ENCODE measurements at regions of chr17 and their contacts with region 1.

Region 1: DNA sequence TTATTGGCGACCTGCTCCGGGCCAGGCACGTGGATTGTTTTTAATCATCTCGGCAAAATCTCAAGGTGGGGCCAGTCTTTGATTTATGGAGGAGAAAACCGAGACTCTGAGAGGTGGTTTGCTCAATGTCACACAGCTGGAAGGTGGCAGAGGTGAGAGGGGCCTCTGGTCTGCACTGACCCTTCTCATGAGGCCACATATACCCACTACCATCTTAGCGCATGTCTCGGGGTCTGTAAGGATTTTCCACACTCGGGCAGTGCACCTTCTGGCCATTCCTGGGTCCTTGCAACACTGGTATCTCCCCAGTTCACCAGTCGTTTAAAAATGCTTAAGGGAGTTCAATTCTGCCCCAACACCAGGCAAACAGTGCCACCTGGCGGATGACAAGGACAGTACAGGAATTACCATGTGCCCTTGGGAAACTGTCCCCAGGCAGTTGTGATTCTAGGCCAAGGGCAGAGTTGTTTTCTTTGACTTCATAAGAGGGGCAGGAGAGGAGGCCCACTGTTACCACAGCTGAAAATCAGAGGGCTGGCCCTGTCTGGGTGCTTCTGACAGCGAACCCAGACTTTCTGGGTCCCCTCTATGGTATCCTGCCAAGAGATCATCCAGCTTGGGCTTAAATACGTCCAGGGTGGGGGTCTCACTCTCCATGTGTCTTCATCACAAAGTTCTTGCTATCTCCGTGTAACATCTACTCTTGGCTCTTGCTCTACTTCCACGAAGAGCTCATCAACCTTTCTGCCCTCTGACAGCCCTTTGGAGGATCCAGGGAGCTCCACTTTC is 39.4 kb upstream of the RAI1 start:
- DNase-seq: peak; percentile 90
- H3K4me3 Mint-ChIP-seq: no peak overlapping the region
- H3K27ac Mint-ChIP-seq: no peak overlapping the region
- H3K4me1 Mint-ChIP-seq: no peaks in the 10 kb centered on the region
- H3K27me3 Mint-ChIP-seq: no peaks in the 10 kb centered on the region

Region 2: DNA sequence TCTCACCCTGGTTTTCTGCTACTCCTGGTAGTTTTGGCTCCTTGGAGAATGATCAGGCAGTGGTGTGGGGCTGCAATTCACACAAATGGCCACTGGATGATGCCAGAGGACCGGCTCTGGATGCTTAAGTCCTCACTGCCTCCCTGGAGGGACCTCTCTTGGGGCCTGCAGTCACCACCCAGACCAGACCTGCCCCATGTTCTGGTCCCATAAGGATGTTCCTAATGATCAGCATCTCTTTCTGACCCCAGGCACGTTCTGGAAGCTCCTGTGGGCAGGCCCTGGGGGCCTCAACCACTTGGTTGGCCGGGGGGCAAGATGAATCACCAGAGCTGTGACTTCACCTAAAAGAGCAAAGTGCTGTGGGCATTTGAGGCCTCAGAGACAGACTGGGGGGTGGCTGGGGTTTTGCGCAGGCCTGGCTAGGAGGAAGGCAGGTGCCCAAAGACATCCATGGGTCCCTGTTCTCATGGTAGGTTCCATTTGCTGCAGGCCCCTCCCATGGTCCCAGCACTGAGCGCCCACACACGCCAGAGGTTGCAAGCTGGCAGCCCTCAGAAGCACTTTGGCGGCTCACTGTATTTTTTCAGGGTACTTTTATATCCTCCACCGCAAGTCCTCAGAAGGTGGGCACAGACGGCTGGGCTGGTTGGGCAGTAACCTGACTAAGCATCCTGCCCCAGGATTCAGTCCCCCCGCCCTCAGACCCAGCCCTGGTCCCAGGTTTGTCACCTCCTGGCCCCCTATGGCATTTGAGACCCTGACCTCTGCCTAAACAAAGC is 285.5 kb before region 1 on chr17:
- CTCF ChIA-PET with region 1: interaction called, 63 read pairs
- intact Hi-C with region 1: loop called (anchors 1 kb)
- DNase-seq: peak; percentile 83
- H3K4me3 Mint-ChIP-seq: no peak overlapping the region
- H3K27ac Mint-ChIP-seq: no peak overlapping the region
- H3K4me1 Mint-ChIP-seq: no peaks in the 10 kb centered on the region
- H3K27me3 Mint-ChIP-seq: no peaks in the 10 kb centered on the region

Region 3: DNA sequence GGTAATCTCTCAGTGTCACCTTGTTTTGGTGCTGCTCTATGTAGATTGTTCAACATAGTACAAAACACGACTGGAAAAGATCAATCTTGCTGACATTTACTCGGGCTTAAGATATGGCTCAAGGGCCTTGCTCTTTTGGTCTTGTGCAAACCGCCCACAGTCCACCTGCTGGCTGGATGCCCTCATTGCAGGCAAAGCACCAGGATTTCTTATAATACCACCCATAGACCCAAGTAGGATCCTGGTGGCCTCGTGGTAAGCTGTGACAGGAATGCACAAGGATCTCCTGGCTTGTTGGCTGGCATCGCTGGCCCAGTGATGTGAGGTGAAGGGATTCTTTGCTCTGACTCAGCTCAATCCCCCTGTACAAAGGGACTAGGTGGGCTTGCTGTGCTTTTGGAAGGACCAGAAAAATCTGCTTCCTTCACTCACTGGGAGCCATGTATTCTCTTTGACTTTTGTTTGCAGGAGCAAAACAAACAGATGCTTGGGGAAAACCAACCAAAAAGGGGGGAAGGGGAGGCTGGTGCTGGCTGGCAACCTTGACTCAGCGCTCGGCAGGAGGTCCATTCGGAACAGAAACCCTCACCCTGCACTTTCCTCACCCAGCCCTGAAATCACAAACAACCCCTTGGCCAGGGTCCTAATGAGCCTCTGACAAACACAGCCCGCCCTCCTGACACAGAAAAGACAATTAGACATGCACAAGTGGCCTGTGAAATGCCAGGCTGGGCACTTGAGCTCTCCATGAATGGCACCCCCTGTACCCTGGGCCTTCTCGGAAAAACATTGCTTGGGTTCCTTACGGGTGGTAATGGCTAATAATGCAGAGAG is 201.6 kb before region 1 on chr17:
- CTCF ChIA-PET with region 1: no interaction called
- intact Hi-C with region 1: loop called (anchors 1 kb)
- DNase-seq: peak; percentile 85
- H3K4me3 Mint-ChIP-seq: no peak overlapping the region
- H3K27ac Mint-ChIP-seq: no peak overlapping the region
- H3K4me1 Mint-ChIP-seq: peaks cover 4% of the 10 kb centered on the region
- H3K27me3 Mint-ChIP-seq: no peaks in the 10 kb centered on the region

Region 4: GRCh38 chr17:17568749-17569195 is 73.0 kb before region 1 on chr17:
- CTCF ChIA-PET with region 1: interaction called, 14 read pairs
- intact Hi-C with region 1: no loop called
- DNase-seq: peak; percentile 78
- H3K4me3 Mint-ChIP-seq: no peak overlapping the region
- H3K27ac Mint-ChIP-seq: no peak overlapping the region
- H3K4me1 Mint-ChIP-seq: peaks cover 2% of the 10 kb centered on the region
- H3K27me3 Mint-ChIP-seq: no peaks in the 10 kb centered on the region

Region 5: DNA sequence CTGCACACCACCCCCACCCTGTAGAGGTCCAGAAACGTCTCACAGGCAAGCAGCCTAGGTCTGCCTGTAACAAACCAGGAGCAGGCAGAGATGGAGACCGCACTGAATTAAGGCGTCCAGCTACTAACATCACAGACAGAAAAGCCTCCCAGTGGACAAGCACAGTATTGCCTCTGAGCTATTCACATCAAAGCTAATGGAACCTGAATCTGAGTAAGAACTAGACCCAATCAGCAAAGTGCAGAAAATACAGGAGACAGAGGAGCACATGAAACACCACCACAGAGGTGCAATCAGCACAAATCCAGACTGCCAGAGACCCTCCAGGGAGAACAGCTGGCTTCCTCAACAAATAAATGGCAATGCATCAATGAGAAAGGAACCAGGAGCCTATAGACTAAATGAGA is 28.1 kb before region 1 on chr17:
- CTCF ChIA-PET with region 1: interaction called, 11 read pairs
- intact Hi-C with region 1: no loop called
- DNase-seq: peak; percentile 71
- H3K4me3 Mint-ChIP-seq: no peak overlapping the region
- H3K27ac Mint-ChIP-seq: no peak overlapping the region
- H3K4me1 Mint-ChIP-seq: peaks cover 3% of the 10 kb centered on the region
- H3K27me3 Mint-ChIP-seq: no peaks in the 10 kb centered on the region